CD14-positive monocyte (primary cell): ENCODE measurements at regions of chr9 and their contacts with region 1.

Region 1: DNA sequence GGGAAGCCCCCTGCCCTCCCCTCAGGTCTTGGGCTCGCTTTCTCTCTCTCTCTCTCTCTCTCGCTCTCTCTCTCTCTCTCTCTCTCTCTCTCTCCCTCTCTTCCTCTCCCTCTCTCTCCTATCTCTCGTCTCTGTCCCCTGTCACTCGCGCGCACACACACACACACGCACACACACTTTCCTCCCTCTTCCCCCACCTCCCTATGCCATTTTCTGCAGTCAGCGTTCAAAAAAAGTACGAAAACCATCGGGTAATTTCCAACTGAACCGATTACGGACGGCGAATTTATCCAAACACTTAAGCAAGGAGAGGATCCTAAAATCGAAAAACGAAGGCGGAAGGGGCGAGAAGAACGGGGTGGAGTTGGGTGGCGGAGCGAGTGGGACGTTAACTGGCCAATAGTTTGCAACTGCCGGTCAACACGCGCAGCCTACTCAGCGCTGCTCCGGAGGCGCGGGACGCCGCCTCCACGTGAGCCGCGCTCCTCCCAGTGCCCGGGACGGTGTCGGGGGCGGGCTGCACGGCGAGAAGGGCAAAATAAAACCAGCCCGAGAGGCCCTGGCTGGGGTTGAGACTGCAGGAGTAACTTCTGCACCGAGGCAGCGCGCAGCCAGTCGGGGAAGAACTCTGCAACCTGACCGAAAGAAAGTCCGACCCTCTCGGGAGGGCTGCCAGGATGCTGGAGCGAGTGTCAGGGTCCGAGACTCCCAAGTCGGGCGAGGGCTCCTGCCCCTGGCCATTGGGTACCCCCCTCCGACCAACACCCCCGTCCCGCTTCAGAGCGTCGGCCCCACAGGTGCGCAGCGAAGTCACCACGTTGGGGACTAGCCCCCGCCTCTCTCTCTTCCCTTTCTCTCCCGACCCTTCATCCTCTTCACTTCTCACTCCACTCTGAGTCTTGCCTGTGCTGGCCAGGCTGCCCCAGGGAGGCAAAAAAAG is 24.9 kb upstream of the ELAVL2 start:
- DNase-seq: no peak
- H3K4me3 ChIP-seq: no peak overlapping the region
- H3K4me3 Mint-ChIP-seq: peak overlapping the region in 1 of 2 donors; percentile 72
- H3K27ac ChIP-seq: no peak overlapping the region
- H3K27ac Mint-ChIP-seq: peak overlapping the region in 2 of 7 donors; percentile 59 to 61
- H3K4me1 ChIP-seq: no peaks in the 10 kb centered on the region
- H3K4me1 Mint-ChIP-seq: no peaks in the 10 kb centered on the region
- H3K27me3 ChIP-seq: peaks cover 2 to 30% of the 10 kb centered on the region in 2 donors
- H3K27me3 Mint-ChIP-seq: peaks cover 25 to 34% (median 25%) of the 10 kb centered on the region in 3 donors
- CTCF ChIP-seq: no peak

Region 2: DNA sequence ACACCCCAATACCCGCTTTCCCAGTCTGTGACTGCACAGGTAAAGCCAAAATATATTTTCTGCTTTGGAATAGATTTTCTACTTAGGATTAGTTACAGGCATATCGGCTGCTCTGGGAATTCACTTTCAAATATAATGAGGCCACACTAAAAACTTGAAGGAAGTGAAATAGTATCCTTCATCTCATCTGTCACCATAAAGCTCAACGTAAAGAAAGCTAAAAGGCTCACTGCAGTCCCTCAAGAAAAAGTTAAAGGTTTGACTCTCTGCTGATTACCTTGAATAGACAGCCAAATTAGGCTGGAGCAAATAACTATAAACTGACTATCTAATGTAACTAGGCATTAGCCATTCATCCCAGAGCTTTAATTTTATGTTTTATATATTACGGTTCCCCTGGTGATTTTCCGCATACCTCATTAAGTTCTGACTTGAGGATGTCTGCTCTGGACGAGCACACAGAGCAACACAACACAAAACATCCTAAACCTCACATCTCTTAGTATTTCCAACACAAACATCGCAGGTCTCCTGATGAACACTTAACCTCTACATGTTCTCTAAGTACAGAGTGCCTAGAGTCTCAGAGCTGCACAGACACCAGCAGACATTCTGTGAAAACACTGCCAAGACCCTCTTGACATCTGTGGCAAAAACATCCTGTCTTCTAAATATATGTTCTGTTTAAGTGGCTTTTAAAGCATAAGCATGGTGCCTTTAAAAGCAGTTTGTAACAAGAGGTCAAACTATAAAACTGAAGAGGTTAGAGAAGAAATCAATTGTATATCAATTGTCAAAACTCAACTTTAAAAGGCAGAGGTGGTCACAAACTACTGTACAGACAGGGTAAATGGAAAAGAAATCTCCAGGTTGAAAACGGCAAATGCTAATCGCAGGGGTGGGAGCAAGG is 60.4 kb before region 1 on chr9:
- intact Hi-C with region 1: loop called in 1 of 2 experiments (anchors 10 kb)
- DNase-seq: no peak
- H3K4me3 ChIP-seq: no peak overlapping the region
- H3K4me3 Mint-ChIP-seq: no peak overlapping the region
- H3K27ac ChIP-seq: no peak overlapping the region
- H3K27ac Mint-ChIP-seq: no peak overlapping the region
- H3K4me1 ChIP-seq: no peaks in the 10 kb centered on the region
- H3K4me1 Mint-ChIP-seq: no peaks in the 10 kb centered on the region
- H3K27me3 ChIP-seq: no peaks in the 10 kb centered on the region
- H3K27me3 Mint-ChIP-seq: peaks cover 0 to under 1% (median 0%) of the 10 kb centered on the region in 3 donors
- CTCF ChIP-seq: no peak

Region 3: GRCh38 chr9:23887781-23888180 is 36.8 kb after region 1 on chr9:
- intact Hi-C with region 1: no loop called
- DNase-seq: no peak
- H3K4me3 ChIP-seq: no peak overlapping the region
- H3K4me3 Mint-ChIP-seq: no peak overlapping the region
- H3K27ac ChIP-seq: no peak overlapping the region
- H3K27ac Mint-ChIP-seq: no peak overlapping the region
- H3K4me1 ChIP-seq: no peaks in the 10 kb centered on the region
- H3K4me1 Mint-ChIP-seq: no peaks in the 10 kb centered on the region
- H3K27me3 ChIP-seq: no peaks in the 10 kb centered on the region
- H3K27me3 Mint-ChIP-seq: no peaks in the 10 kb centered on the region
- CTCF ChIP-seq: no peak

Region 4: DNA sequence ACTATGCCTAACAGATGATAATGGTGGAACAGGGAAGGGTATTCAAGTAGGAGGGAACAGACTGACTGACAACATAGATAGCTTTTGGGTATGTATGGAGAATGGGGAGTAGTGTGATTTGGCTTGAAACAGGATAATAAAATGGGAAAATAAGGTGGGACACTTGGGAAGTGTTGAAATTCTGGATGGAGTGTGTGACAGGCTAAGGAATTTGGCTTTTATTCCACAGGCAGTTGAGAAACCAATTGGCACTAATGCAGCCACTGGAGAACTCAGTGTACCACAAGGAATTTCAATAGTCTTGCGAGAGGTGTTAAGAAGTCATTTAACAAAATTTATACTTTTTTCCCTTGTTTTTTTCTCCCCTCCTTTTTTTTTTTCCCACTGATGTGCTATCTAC is 128.5 kb after region 1 on chr9:
- intact Hi-C with region 1: no loop called
- DNase-seq: no peak
- H3K4me3 ChIP-seq: no peak overlapping the region
- H3K4me3 Mint-ChIP-seq: no peak overlapping the region
- H3K27ac ChIP-seq: no peak overlapping the region
- H3K27ac Mint-ChIP-seq: no peak overlapping the region
- H3K4me1 ChIP-seq: no peaks in the 10 kb centered on the region
- H3K4me1 Mint-ChIP-seq: no peaks in the 10 kb centered on the region
- H3K27me3 ChIP-seq: no peaks in the 10 kb centered on the region
- H3K27me3 Mint-ChIP-seq: no peaks in the 10 kb centered on the region
- CTCF ChIP-seq: no peak